Activated B cell treated with CpG ODN at 0.5 μM for 24 hours (primary cell): ENCODE measurements at regions of chr16 and their contacts with region 1.

Region 1: DNA sequence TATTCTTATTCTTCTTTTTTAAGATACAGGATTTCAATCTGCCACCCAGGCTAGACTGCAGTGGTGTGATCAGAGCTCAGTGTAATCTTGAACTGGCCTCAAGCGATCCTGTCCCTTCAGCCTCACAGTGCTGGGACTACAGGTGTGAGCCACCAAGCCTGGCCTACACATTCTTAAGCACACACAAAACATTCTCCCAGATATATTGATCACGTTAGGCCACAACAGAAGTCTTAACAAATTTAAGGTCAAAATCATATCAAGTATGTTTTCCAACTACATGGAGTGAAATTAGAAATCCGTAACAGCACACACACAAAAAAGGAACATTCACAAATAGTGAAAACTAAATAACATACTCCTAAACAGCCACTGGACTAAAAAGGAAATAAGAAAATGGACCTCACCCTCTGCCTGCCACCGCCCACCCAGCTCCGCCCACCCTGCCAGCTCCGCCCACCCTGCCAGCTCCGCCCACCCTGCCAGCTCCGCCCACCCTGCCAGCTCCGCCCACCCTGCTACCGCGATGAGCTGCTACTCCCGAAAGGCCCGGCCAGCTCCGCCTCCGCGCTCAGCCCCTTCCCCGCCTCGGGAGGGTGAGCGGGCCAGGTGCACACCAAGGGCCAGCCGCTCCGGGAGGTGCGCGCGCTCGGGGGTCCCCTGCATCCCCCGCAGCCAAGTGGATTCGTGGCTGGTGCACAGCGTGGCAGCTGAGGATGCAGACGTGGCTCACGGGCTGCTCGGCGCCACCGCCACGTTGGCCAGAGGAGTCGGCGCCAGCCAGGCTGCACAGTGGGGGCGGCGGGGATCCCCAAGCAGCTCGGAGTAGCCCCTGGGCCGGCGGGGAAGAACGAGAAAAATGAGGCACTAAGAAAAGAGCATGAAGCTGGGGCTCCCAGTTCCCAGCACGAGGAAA is 41.2 kb downstream of the C16orf87 start:
- DNase-seq: peak; percentile 77
- ATAC-seq: peak; percentile 93
- H3K4me3 Mint-ChIP-seq: peak overlapping the region; percentile 84
- H3K27ac Mint-ChIP-seq: peak overlapping the region; percentile 86
- H3K4me1 Mint-ChIP-seq: peaks cover 57% of the 10 kb centered on the region
- H3K27me3 Mint-ChIP-seq: no peaks in the 10 kb centered on the region
- CTCF ChIP-seq: no peak

Region 2: DNA sequence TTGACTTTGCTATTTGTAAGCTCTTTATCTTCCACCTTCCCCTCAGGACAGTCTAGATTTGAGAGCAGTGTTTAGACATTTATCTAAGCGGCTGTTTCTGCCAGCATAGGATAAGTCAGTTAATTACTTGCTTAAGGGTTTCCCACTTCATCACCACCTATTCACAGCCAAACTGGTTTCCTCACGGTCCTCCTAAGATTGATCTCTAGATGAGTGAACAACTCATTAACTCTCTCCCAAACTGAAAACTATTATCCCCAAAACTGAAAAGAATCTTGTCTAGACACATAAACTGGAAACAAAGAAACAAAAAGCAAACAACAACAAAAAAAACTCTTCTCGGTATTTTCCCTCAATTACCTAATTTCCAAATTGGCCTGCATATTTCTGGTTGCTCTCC is 226.8 kb before region 1 on chr16:
- CTCF ChIA-PET with region 1: no interaction called
- POLR2A ChIA-PET with region 1: no interaction called
- intact Hi-C with region 1: no loop called
- DNase-seq: no peak
- ATAC-seq: no peak
- H3K4me3 Mint-ChIP-seq: no peak overlapping the region
- H3K27ac Mint-ChIP-seq: no peak overlapping the region
- H3K4me1 Mint-ChIP-seq: no peaks in the 10 kb centered on the region
- H3K27me3 Mint-ChIP-seq: peaks cover 1% of the 10 kb centered on the region
- CTCF ChIP-seq: no peak

Region 3: GRCh38 chr16:46629331-46630219 is 160.2 kb before region 1 on chr16:
- CTCF ChIA-PET with region 1: no interaction called
- POLR2A ChIA-PET with region 1: no interaction called
- intact Hi-C with region 1: no loop called
- DNase-seq: no peak
- ATAC-seq: no peak
- H3K4me3 Mint-ChIP-seq: no peak overlapping the region
- H3K27ac Mint-ChIP-seq: no peak overlapping the region
- H3K4me1 Mint-ChIP-seq: no peaks in the 10 kb centered on the region
- H3K27me3 Mint-ChIP-seq: no peaks in the 10 kb centered on the region
- CTCF ChIP-seq: no peak

Region 4: GRCh38 chr16:46763147-46763546 is 26.6 kb before region 1 on chr16:
- CTCF ChIA-PET with region 1: no interaction called
- POLR2A ChIA-PET with region 1: no interaction called
- intact Hi-C with region 1: no loop called
- DNase-seq: no peak
- ATAC-seq: no peak
- H3K4me3 Mint-ChIP-seq: no peak overlapping the region
- H3K27ac Mint-ChIP-seq: no peak overlapping the region
- H3K4me1 Mint-ChIP-seq: peaks cover 15% of the 10 kb centered on the region
- H3K27me3 Mint-ChIP-seq: no peaks in the 10 kb centered on the region
- CTCF ChIP-seq: no peak

Region 5: GRCh38 chr16:46801428-46802049 is 11.8 kb after region 1 on chr16:
- CTCF ChIA-PET with region 1: interaction called, 14 read pairs
- POLR2A ChIA-PET with region 1: no interaction called
- intact Hi-C with region 1: loop called (anchors 1 kb)
- DNase-seq: no peak
- ATAC-seq: no peak
- H3K4me3 Mint-ChIP-seq: no peak overlapping the region
- H3K27ac Mint-ChIP-seq: no peak overlapping the region
- H3K4me1 Mint-ChIP-seq: no peaks in the 10 kb centered on the region
- H3K27me3 Mint-ChIP-seq: no peaks in the 10 kb centered on the region
- CTCF ChIP-seq: no peak

Region 6: DNA sequence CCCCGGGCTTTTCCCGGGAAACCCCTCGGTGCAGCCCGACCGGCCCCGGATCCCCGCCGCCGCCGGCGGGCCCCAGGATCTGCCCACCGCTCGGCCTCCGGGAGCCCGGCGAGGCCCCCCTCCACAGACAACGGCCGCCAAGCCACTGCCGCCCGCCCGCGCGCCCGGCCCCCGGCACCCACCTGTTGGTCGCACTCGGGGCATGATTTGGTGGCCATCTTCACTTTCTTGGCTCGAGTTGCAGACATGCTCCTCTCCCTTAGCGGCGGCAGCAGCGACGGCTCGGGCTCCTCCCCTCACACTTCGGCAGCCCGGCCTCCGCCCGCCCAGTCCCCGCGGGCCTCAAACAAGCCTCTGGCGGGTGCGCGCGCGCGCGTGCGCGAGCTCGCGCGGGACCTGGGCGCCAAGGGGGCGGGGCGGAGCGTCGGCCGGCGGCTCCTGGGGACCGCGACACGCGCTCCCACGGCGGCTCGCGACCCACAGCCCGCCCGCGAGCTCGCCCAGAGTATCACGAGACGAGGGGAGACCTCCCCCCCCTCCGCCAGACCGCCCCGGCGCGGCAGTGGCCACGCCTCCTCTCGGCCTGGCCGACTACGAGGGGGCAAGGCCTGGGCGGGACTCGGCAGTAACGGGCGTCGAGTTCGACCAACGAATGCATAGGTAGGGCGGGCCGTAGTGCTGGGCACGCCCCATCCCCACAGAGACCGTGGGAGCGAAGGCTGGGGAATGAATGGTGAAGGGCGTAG is 41.3 kb after region 1 on chr16 and contains the start of gene C16orf87:
- CTCF ChIA-PET with region 1: interaction called, 3 read pairs
- POLR2A ChIA-PET with region 1: interaction called, 26 read pairs
- intact Hi-C with region 1: loop called (anchors 1 kb)
- DNase-seq: peak; percentile 90
- ATAC-seq: peak; percentile 92
- H3K4me3 Mint-ChIP-seq: peak within 1 kb of the TSS; percentile 99
- H3K27ac Mint-ChIP-seq: peak within 1 kb of the TSS; percentile 95
- H3K4me1 Mint-ChIP-seq: peaks cover 68% of the 10 kb centered on the region
- H3K27me3 Mint-ChIP-seq: no peaks in the 10 kb centered on the region
- CTCF ChIP-seq: no peak
- total RNA-seq, gene C16orf87: 15.6 and 16.6 TPM in 2 replicates

Region 7: GRCh38 chr16:46891910-46892309 is 102.2 kb after region 1 on chr16:
- CTCF ChIA-PET with region 1: no interaction called
- POLR2A ChIA-PET with region 1: no interaction called
- intact Hi-C with region 1: no loop called
- DNase-seq: no peak
- ATAC-seq: no peak
- H3K4me3 Mint-ChIP-seq: no peak overlapping the region
- H3K27ac Mint-ChIP-seq: no peak overlapping the region
- H3K4me1 Mint-ChIP-seq: no peaks in the 10 kb centered on the region
- H3K27me3 Mint-ChIP-seq: no peaks in the 10 kb centered on the region
- CTCF ChIP-seq: no peak

Region 8: GRCh38 chr16:46918861-46919792 is 129.4 kb after region 1 on chr16:
- CTCF ChIA-PET with region 1: no interaction called
- POLR2A ChIA-PET with region 1: no interaction called
- intact Hi-C with region 1: loop called (anchors 5 kb)
- DNase-seq: peak; percentile 34
- ATAC-seq: peak; percentile 60
- H3K4me3 Mint-ChIP-seq: peak overlapping the region; percentile 75
- H3K27ac Mint-ChIP-seq: peak overlapping the region; percentile 80
- H3K4me1 Mint-ChIP-seq: peaks cover 69% of the 10 kb centered on the region
- H3K27me3 Mint-ChIP-seq: no peaks in the 10 kb centered on the region
- CTCF ChIP-seq: no peak

Region 9: DNA sequence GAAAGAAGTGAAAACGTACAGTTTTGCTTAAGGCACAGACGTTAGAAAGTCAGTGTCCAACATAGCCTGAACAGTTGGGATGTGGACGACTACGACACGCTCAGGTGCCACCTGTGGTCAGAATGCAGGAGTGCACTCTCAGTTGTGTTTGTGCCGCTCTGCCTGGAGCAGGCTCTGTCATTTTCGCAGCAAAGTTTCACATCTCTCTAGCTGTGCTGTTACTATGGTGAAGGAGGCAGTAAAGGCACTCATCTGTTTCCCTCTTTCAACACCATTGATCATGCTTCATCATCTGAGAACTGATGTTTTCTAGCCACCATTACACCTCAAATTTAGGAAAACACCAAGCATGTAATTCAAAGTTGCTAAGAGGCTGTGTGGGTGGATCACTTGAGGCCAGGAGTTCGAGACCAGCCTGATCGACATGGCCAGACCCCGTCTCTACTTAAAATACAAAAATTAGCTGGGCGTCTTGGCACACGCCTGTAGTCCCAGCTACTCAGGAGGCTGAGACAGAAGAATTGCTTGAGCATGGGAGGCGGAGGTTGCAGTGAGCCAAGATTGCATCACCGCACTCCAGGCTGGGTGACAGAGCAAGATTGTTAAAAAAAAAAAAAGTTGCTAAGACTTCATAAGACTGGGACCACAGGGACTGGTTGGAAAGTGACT is 228.6 kb after region 1 on chr16:
- CTCF ChIA-PET with region 1: no interaction called
- POLR2A ChIA-PET with region 1: no interaction called
- intact Hi-C with region 1: loop called (anchors 5 kb)
- DNase-seq: peak; percentile 39
- ATAC-seq: peak; percentile 98
- H3K4me3 Mint-ChIP-seq: peak overlapping the region; percentile 13
- H3K27ac Mint-ChIP-seq: peak overlapping the region; percentile 73
- H3K4me1 Mint-ChIP-seq: peaks cover 28% of the 10 kb centered on the region
- H3K27me3 Mint-ChIP-seq: no peaks in the 10 kb centered on the region
- CTCF ChIP-seq: no peak